Activated CD4-positive, alpha-beta memory T cell treated with anti-CD3 and anti-CD28 coated beads for 36 hours (primary cell): ENCODE measurements at regions of chr6 and their contacts with region 1.

Region 1: DNA sequence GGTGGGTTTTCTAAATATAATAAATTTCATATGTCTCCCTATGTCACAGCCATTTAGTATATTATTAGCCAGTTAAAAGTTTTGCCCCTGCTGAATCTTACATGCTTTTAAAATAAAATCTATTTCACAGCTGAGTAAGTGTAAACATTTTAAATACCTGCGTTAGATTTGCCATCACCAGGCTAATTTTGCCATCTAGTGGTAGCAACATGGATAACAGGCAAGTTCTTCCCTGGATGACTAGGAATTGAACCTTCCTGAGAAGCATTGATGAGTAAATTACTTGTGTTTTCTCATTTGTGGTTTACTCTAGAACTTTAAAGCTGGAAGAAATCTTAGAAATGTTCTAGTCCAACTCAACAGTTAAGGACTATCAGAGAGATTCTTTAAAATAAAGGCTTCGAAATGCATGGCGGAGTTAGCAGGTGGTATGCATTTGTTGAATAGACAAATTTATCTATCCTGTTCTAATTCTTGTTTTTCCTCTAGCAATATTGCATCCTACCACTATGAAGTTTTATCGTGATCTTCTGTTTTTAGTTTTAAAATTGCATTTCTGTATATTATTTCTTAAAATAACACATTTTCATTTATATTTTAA is 2.6 kb downstream of the PRSS35 start:
- DNase-seq: peak; percentile 10
- H3K4me3 Mint-ChIP-seq: no peak overlapping the region
- H3K27ac Mint-ChIP-seq: no peak overlapping the region
- H3K4me1 Mint-ChIP-seq: peaks cover 5% of the 10 kb centered on the region
- H3K27me3 Mint-ChIP-seq: peaks cover 27% of the 10 kb centered on the region

Region 2: DNA sequence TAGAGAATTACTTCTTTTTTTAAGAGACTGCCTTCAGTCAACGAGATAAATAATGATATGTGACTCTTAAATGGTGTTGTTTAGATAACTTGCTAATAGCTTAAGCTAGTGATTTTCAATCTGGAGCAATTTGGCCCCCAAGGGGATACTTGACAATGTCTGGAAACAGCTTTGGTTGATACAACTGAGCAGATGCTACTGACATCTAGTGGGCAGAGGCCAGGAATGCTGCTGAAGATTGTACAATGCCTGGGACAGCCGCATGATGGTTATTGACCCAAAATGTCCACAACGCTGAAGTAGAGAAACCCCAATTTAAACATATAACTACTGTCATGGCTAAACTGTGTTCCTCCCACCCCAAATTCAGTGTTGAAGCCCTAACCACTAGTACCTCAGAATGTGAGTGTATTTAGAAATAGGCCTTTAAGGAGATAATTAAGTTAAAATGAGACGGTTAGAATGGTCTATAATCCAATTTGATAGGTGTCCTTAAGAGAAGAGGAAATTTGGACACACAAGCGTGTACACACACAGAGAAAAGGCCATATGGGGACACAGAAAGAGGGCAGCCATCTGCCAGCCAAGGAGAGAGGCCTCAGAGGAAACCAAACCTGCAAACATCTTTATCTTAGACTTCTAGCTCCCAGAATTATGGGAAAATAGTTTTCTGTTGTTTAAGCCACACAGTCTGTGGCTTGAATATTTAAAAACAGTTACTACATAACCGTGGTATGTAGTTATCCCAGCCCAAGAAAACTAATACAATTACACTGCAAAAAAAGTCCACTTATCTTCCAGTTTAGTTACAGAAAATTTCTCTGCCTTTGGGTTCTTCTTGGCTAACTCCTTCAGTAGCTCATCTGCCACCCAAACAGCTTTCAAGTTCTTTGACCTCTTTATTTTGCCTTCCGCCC is 299.6 kb before region 1 on chr6:
- CTCF ChIA-PET with region 1: interaction called, 174 read pairs
- POLR2A ChIA-PET with region 1: no interaction called
- intact Hi-C with region 1: no loop called
- DNase-seq: peak; percentile 70
- H3K4me3 Mint-ChIP-seq: no peak overlapping the region
- H3K27ac Mint-ChIP-seq: no peak overlapping the region
- H3K4me1 Mint-ChIP-seq: no peaks in the 10 kb centered on the region
- H3K27me3 Mint-ChIP-seq: peaks cover 5% of the 10 kb centered on the region

Region 3: DNA sequence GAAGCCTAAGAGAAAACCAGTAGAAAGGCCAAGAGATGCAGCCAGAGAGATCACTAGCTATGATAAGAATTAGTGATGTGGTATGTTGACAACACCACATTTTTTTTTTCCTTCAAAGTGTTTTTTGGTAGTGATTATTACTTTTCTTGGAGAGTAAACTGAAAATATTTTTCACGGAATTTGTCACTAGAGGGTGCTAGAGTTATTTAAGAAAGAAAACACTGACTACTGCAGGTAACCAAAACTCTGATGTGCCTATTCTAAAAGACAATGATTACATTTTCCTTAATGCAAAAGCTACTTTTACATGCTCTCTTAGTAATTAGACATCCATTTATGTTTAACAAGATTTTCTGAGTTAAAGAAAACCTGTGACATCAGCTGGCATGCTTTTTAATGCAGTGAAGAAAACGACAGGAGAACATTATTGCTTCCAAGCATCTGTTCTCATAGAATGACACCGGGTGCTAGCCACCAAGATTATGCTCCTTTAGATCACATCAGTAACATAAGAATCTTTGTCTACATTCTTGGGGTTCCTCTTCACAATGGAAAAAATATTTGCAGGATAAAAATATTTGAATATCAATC is 293.0 kb before region 1 on chr6:
- CTCF ChIA-PET with region 1: interaction called, 174 read pairs
- POLR2A ChIA-PET with region 1: no interaction called
- intact Hi-C with region 1: loop called (anchors 1 kb)
- DNase-seq: no peak
- H3K4me3 Mint-ChIP-seq: no peak overlapping the region
- H3K27ac Mint-ChIP-seq: no peak overlapping the region
- H3K4me1 Mint-ChIP-seq: no peaks in the 10 kb centered on the region
- H3K27me3 Mint-ChIP-seq: no peaks in the 10 kb centered on the region

Region 4: DNA sequence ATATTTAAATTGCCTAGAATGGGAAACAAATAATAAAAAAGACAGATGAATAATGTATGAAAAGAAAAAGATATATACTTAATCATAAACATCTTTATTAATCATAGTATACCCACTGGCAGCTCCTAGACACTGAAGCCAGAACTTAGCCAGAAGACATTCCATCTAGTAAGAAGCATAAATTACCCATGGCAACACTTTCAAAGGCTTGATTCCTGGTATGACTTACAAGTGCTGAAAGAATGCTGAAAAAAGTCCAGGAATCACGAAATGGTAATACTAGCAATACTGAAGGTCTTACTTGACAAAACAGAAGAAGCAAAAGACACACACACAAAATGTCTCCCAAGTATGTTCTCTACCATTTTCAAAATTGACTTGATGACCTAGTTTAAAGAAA is 283.8 kb before region 1 on chr6:
- CTCF ChIA-PET with region 1: interaction called, 10 read pairs
- POLR2A ChIA-PET with region 1: no interaction called
- intact Hi-C with region 1: no loop called
- DNase-seq: no peak
- H3K4me3 Mint-ChIP-seq: no peak overlapping the region
- H3K27ac Mint-ChIP-seq: no peak overlapping the region
- H3K4me1 Mint-ChIP-seq: no peaks in the 10 kb centered on the region
- H3K27me3 Mint-ChIP-seq: peaks cover 6% of the 10 kb centered on the region

Region 5: GRCh38 chr6:83417880-83418663 is 96.9 kb before region 1 on chr6:
- CTCF ChIA-PET with region 1: interaction called, 10 read pairs
- POLR2A ChIA-PET with region 1: no interaction called
- intact Hi-C with region 1: loop called (anchors 1 kb)
- DNase-seq: no peak
- H3K4me3 Mint-ChIP-seq: no peak overlapping the region
- H3K27ac Mint-ChIP-seq: no peak overlapping the region
- H3K4me1 Mint-ChIP-seq: no peaks in the 10 kb centered on the region
- H3K27me3 Mint-ChIP-seq: no peaks in the 10 kb centered on the region

Region 6: DNA sequence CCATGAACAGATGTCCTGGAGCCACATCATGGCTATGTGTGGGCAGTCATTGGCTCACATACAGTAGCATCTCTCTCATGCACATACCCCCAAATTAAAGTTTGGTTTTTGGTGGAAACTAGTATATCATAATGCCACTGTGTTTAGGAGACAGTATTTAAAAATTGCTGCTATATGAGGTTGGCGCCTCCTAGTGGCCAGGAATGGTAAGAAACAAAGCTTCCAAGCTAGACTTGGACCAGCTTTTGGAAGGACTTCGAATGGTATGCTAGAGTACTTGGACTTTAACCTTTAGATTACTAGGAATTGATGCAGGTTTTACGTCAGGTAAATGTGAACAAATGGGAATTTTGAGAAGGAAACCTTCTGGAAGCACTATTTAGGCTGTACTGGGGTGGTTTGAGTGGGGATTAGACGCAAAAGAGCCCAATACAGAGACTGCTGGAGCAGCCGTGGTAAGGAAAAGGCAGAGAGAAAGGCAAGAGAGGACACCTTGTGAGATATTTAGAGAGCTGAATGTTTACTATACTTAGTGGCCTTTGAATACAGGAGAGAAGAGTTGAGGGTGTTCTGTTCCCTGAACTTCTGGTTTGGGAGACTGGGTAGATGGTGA is 21.2 kb after region 1 on chr6:
- CTCF ChIA-PET with region 1: interaction called, 10 read pairs
- POLR2A ChIA-PET with region 1: no interaction called
- intact Hi-C with region 1: no loop called
- DNase-seq: peak; percentile 56
- H3K4me3 Mint-ChIP-seq: no peak overlapping the region
- H3K27ac Mint-ChIP-seq: no peak overlapping the region
- H3K4me1 Mint-ChIP-seq: no peaks in the 10 kb centered on the region
- H3K27me3 Mint-ChIP-seq: peaks cover 2% of the 10 kb centered on the region

Region 7: DNA sequence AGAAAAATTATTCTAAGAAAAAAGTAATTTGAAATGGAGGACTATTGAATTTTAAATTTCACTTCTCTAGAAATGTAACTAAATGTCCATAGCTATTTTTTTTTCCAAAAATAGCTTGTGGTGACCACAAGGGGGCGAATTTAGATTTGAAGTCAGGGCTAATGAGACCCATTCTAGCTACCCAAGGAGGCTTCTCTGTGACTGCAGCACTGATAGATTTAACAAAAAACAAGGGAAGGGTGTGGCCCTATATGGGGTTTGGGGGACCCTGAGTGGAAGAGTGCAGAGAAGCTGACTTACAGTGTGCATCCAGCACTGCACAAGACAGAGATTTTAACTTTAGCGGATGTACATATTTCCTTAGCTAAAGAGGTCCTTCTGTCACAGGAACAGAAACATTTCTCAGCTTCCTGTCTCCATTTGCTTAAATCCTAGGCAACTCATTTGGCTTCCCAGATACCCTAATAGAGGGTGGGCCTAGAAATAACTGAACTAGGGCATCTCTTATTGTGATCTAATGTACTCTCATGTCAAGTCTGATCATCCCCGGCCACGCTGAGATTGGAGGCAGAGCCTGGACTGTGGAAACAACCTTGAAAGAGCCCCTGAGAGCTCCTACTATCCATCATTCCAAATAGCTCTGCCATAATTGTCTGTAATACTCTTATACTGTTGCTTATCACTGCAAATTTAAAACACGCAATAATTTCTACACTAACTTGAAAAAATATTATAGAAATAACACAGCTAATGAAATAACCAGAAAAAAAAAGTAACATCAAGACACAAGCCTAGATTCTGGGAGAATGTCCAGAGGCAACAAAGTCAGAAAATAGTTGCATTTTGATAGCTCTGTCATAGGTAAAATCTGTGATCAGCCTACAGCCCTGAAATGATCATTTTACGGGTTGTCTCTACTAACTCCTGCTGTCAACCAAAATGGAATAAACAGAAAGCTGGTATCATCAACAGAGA is 100.3 kb after region 1 on chr6:
- CTCF ChIA-PET with region 1: no interaction called
- POLR2A ChIA-PET with region 1: no interaction called
- intact Hi-C with region 1: no loop called
- DNase-seq: no peak
- H3K4me3 Mint-ChIP-seq: no peak overlapping the region
- H3K27ac Mint-ChIP-seq: no peak overlapping the region
- H3K4me1 Mint-ChIP-seq: no peaks in the 10 kb centered on the region
- H3K27me3 Mint-ChIP-seq: no peaks in the 10 kb centered on the region